ENCODE measurements at regions of chr20 and their contacts with region 1.

Region 1: DNA sequence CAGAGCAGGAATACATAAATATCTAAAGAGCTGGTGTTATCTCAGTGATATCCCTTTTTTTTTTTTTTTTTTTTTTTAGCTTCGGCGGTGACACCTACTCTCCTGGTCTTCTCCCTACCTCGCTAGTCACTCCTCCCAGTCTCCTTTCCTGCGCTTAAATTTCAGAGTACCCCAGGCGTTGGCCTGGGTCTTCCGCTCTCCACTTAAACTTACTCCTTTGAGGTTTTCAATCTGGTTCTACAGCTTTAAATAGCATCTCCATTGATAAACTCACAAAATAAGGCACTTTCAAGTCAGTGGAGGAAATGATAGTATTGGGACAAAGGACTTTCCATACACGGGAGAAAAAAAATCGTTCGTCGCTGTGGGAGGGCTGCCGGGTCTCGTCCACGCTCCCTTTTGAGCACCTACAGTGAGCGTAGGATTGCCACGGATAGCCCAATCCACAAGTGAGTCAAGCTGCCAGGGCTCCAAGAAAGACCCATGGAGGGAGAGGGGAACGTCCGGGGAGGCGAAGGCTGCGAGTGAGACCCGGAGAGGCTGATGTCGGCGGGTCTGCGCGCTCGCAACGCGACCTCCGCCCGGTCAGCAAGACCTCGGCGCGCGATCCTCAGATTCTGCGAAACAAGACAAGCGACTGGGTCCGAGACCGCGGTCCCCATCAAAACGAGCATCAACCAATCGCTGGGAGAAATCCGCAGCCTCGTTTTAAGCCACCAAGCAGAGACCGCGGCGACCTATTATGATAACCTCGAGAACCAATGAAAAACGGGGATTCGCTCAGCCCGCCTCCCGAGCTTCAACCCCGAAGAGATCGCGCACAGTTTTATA is 672 bp upstream of the SRSF6 start:
- DNase-seq: peak; percentile 96

Region 2: GRCh38 chr20:43691928-43692524 is 235.0 kb after region 1 on chr20:
- in situ Hi-C with region 1: loop called (anchors 25 kb)
- DNase-seq: peak; percentile 64

Region 3: DNA sequence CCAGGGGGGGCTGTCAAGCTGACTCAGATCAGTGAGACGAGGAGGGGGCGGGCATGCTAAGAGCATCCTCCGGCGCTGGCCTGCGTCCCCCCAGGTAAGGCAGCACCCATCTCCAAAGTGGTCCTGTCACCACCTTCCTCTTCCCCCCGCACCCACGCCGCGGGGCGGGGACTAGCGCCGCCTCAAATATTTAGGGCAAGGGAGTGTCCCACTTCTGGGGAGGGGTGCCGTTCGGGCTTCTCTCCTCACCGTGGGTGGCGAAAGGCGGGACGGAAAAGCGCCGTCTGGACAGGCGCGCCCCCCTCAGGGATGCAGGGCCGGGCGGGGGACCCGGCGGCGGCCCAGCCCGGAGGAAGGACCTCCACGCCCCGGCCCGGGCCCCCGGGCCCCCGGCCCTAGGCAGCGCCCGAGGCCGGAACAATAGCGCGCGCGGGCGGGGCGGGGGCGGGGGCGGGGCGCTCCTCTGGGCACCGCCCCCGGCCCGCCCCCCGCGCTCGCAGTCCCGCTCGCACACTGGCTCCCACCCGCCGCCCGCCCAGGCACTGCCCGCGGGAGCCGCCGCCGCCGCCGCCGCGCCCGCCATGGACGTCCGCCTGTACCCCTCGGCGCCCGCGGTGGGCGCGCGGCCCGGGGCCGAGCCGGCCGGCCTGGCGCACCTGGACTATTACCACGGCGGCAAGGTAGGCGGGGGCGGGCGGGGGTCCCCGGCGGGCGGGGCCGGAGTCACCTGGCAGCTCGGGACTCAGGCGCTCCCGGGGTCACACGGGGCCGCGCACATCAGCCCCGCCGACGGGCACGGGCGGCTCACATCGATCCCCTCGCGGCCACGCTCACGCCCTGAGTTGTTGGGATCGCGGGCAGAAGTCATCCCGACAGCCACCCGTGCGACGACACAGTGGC is 457.5 kb after region 1 on chr20 and contains the start of gene TOX2:
- in situ Hi-C with region 1: no loop called
- DNase-seq: no peak

Measured in KBM-7 (cell line).